HEK293 (cell line): ENCODE measurements at regions of chr1 and their contacts with region 1.

Region 1: DNA sequence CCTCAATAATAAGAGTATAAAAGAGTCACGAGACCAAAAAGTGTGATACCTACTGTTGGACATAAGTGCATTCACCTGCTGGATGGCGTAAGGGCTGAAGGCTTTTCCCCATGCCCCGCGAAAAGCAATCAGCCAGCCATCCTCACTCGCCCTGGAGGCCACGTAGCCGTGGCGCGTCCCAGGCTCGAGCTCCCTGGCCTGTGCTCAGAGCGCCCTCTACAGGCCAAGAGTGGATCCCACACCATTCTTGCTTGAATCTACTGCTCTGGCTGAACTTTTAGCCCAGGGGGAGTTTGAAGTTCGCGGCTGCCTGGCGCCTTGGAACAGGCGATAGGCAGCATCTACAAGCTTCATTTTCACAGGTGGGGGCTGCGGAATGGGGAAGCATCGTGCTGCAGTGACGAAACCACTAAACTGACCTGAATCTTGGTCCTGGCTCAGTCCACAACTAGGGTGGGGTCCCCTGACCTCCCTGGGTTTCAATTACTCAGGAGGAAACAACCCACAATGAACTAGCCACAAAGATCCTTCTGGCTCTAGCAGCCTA is 70.3 kb upstream of the SERBP1 start:
- H3K4me3 ChIP-seq: no peak overlapping the region
- H3K27ac ChIP-seq: no peak overlapping the region
- H3K4me1 ChIP-seq: no peaks in the 10 kb centered on the region
- CTCF ChIP-seq: peak; percentile 99

Region 2: GRCh38 chr1:66764994-66765578 is 735.4 kb before region 1 on chr1:
- CTCF ChIA-PET with region 1: interaction called, 11 read pairs
- POLR2A ChIA-PET with region 1: no interaction called
- H3K4me3 ChIP-seq: no peak overlapping the region
- H3K27ac ChIP-seq: no peak overlapping the region
- H3K4me1 ChIP-seq: no peaks in the 10 kb centered on the region
- CTCF ChIP-seq: no peak

Region 3: DNA sequence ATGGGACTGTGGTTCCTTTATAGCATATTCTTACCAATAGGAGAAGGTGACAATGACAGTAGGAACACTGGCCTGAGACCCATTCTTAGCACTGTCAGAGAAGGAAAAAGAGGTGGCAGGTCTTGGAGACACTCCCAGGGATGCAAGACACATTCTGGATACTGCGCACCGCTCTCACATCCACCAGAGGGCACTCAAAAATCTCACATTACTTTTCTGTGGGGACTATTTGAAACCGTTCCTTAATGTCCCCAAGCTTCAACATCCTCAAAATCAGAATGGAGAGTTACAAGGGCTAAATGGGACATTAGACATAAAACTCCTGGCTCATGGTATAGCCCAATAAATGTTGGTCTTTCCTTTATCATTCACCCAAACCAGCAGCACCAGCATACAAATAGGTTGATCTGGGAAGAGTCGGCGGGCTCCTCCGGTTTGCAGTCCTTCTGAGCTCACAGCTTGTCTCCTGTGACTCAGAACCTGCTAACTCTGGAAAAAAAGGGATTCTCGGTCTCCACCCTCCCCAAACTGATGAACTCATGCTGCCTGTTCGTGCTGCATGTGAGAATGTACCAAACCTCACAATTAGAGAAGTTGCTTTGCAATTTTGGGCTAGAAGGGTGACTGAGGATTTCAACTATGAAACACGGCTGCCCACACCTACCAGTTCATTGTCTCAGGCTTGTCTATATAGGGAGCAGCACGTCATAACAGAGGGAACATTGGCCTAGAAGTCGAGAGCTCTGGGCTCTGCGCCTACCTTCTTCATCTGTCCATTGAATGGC is 152.6 kb before region 1 on chr1:
- CTCF ChIA-PET with region 1: interaction called, 91 read pairs
- POLR2A ChIA-PET with region 1: no interaction called
- H3K4me3 ChIP-seq: no peak overlapping the region
- H3K27ac ChIP-seq: no peak overlapping the region
- H3K4me1 ChIP-seq: no peaks in the 10 kb centered on the region
- CTCF ChIP-seq: peak; percentile 69

Region 4: DNA sequence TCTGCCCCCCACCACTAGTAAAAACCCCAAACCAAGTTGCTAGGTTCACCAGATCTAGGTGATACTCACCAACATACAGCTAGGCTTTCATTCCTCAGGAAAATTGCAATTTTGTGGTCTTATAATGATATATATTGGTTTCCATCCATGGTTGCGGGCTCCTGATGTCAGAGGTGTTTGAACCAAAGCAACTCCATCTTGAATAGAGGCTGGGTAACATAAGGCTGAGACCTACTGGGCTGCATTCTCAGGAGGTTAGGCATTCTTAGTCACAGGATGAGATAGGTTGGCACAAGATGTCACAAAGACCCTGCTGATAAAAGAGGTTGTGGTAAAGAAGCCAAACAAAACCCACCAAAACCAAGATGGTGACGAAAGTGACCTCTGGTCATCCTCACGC is 100.9 kb before region 1 on chr1:
- CTCF ChIA-PET with region 1: no interaction called
- POLR2A ChIA-PET with region 1: no interaction called
- H3K4me3 ChIP-seq: no peak overlapping the region
- H3K27ac ChIP-seq: no peak overlapping the region
- H3K4me1 ChIP-seq: no peaks in the 10 kb centered on the region
- CTCF ChIP-seq: no peak

Region 5: GRCh38 chr1:67430352-67431155 is 69.9 kb before region 1 on chr1 and contains the start of gene SERBP1:
- CTCF ChIA-PET with region 1: interaction called, 13 read pairs
- POLR2A ChIA-PET with region 1: interaction called, 9 read pairs
- H3K4me3 ChIP-seq: peak within 1 kb of the TSS; percentile 98
- H3K27ac ChIP-seq: peak within 1 kb of the TSS; percentile 96
- H3K4me1 ChIP-seq: peaks cover 9% of the 10 kb centered on the region
- CTCF ChIP-seq: no peak

Region 6: GRCh38 chr1:67479146-67479891 is 21.2 kb before region 1 on chr1:
- CTCF ChIA-PET with region 1: interaction called, 12 read pairs
- POLR2A ChIA-PET with region 1: no interaction called
- H3K4me3 ChIP-seq: no peak overlapping the region
- H3K27ac ChIP-seq: no peak overlapping the region; the same call in 1 of the 2 replicates
- H3K4me1 ChIP-seq: peaks cover 8% of the 10 kb centered on the region
- CTCF ChIP-seq: no peak

Region 7: GRCh38 chr1:67517046-67517445 is 16.6 kb after region 1 on chr1:
- CTCF ChIA-PET with region 1: interaction called, 15 read pairs
- POLR2A ChIA-PET with region 1: interaction called, 3 read pairs
- H3K4me3 ChIP-seq: no peak overlapping the region
- H3K27ac ChIP-seq: no peak overlapping the region
- H3K4me1 ChIP-seq: no peaks in the 10 kb centered on the region
- CTCF ChIP-seq: no peak